ENCODE measurements at regions of chr1 and their contacts with region 1.

Region 1: GRCh38 chr1:59779949-59780348 is 34.8 kb upstream of the HOOK1 start:
- DNase-seq: peak in 1 of 35 experiments; percentile 5
- ATAC-seq: no peak
- H3K4me3 ChIP-seq: no peak overlapping the region
- H3K4me3 Mint-ChIP-seq: no peak overlapping the region
- H3K27ac ChIP-seq: no peak overlapping the region
- H3K27ac Mint-ChIP-seq: no peak overlapping the region
- H3K4me1 ChIP-seq: no peaks in the 10 kb centered on the region
- H3K4me1 Mint-ChIP-seq: no peaks in the 10 kb centered on the region
- H3K27me3 ChIP-seq: no peaks in the 10 kb centered on the region
- H3K27me3 Mint-ChIP-seq: peaks cover 0 to 5% of the 10 kb centered on the region in 2 donors

Region 2: GRCh38 chr1:58764294-58764978 is 1015.5 kb before region 1 on chr1:
- CTCF ChIA-PET with region 1: no interaction called
- POLR2A ChIA-PET with region 1: no interaction called
- DNase-seq: no peak
- ATAC-seq: no peak
- H3K4me3 ChIP-seq: no peak overlapping the region
- H3K4me3 Mint-ChIP-seq: no peak overlapping the region
- H3K27ac ChIP-seq: no peak overlapping the region
- H3K27ac Mint-ChIP-seq: no peak overlapping the region
- H3K4me1 ChIP-seq: no peaks in the 10 kb centered on the region
- H3K4me1 Mint-ChIP-seq: no peaks in the 10 kb centered on the region
- H3K27me3 ChIP-seq: no peaks in the 10 kb centered on the region
- H3K27me3 Mint-ChIP-seq: peaks cover 2 to 7% of the 10 kb centered on the region in 2 donors

Region 3: GRCh38 chr1:59631561-59632255 is 148.2 kb before region 1 on chr1:
- CTCF ChIA-PET with region 1: no interaction called
- POLR2A ChIA-PET with region 1: no interaction called
- DNase-seq: no peak
- ATAC-seq: no peak
- H3K4me3 ChIP-seq: no peak overlapping the region
- H3K4me3 Mint-ChIP-seq: no peak overlapping the region
- H3K27ac ChIP-seq: no peak overlapping the region
- H3K27ac Mint-ChIP-seq: no peak overlapping the region
- H3K4me1 ChIP-seq: no peaks in the 10 kb centered on the region
- H3K4me1 Mint-ChIP-seq: no peaks in the 10 kb centered on the region
- H3K27me3 ChIP-seq: no peaks in the 10 kb centered on the region
- H3K27me3 Mint-ChIP-seq: no peaks in the 10 kb centered on the region

Region 4: DNA sequence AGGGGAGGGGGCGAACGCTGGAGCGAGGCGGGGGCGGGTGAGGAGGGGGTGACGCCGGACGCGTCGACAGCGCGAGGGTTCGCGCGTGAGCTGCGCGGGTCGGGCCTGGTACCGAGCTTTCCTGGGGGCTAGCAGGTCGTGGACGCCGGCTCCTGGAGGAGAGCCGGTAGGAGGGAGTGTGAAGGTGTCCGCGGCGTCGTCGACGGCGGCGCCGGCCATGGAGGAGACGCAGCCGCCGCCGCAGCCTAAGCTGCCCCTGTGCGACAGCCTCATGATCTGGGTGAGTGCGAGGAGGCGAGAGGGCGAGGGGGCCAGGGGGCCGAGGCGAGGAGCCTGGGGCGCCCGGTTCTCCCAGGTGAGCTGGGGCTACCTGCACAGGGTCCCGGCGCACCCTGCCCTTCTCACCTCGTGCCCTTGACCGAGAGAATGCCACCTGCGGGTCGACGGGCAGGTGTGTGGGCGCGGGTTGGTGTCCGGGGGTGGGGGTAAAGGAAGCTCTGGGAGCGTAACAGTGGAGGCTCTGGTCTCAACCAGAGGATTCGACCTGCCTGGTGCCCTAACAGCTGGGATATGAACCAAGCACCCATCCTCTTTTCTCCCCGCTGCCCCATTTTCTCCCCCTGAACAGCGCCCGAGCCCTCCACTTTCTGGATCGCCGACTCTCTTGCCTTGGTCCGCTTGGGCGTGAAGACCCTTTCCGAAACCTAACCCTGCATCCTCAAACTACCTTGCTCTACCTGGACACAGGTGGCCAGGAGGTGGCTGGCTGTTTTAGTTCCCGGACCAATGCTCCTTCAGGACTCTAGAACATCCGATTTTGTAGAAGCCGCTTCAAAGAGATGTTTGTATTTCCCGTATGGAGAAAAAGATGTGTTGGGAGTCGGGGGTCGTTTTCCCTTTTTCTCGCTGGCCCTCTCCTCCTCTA is 35.2 kb after region 1 on chr1 and contains the start of gene HOOK1:
- CTCF ChIA-PET with region 1: interaction called in 1 of 2 experiments, 12 read pairs
- POLR2A ChIA-PET with region 1: interaction called in 1 of 2 experiments, 5 read pairs
- DNase-seq: peak in 8 of 35 experiments; percentile 0 to 25 (median 0)
- ATAC-seq: peak in 3 of 4 experiments; percentile 3 to 29 (median 4)
- H3K4me3 ChIP-seq: peak within 1 kb of the TSS; percentile 70 to 77
- H3K4me3 Mint-ChIP-seq: peak within 1 kb of the TSS in 1 of 3 donors; percentile 18
- H3K27ac ChIP-seq: peak within 1 kb of the TSS; percentile 56
- H3K27ac Mint-ChIP-seq: peak within 1 kb of the TSS; percentile 55 to 86
- H3K4me1 ChIP-seq: peaks cover 13 to 19% of the 10 kb centered on the region in 2 experiments
- H3K4me1 Mint-ChIP-seq: peaks cover 7 to 15% (median 10%) of the 10 kb centered on the region in 3 donors
- H3K27me3 ChIP-seq: peaks cover 0 to 11% of the 10 kb centered on the region in 2 experiments
- H3K27me3 Mint-ChIP-seq: peaks cover 7 to 16% of the 10 kb centered on the region in 2 donors
- total RNA-seq, gene HOOK1: 12.8 to 20.3 (median 16.8) TPM